Transverse colon (tissue), 4 donors: ENCODE measurements at regions of chr21 and their contacts with region 1.

Region 1: GRCh38 chr21:44873356-44874239 is at the start of gene PTTG1IP:
- DNase-seq: peak; percentile 99
- H3K4me3 ChIP-seq: peak within 1 kb of the TSS; percentile 76 to 99 (median 90)
- H3K27ac ChIP-seq: peak within 1 kb of the TSS; percentile 90 to 99 (median 96)
- H3K4me1 ChIP-seq: peaks cover 34 to 69% (median 50%) of the 10 kb centered on the region in 4 donors
- H3K27me3 ChIP-seq: no peaks in the 10 kb centered on the region
- CTCF ChIP-seq: no peak
- EP300 ChIP-seq: no peak
- POLR2A ChIP-seq: peak; percentile 91
- total RNA-seq, gene PTTG1IP: 157 to 552 (median 288) TPM

Region 2: GRCh38 chr21:45894443-45894810 is 1020.8 kb after region 1 on chr21:
- in situ Hi-C with region 1: loop called in 1 of 4 experiments (anchors 10 kb)
- intact Hi-C with region 1: no loop called
- DNase-seq: peak; percentile 29
- H3K4me3 ChIP-seq: no peak overlapping the region
- H3K27ac ChIP-seq: peak overlapping the region; percentile 0 to 62 (median 46)
- H3K4me1 ChIP-seq: peaks cover 0 to 18% (median 14%) of the 10 kb centered on the region in 4 donors
- H3K27me3 ChIP-seq: no peaks in the 10 kb centered on the region
- CTCF ChIP-seq: no peak
- EP300 ChIP-seq: no peak
- POLR2A ChIP-seq: no peak